Caco-2 (cell line): ENCODE measurements at regions of chr3 and their contacts with region 1.

Region 1: DNA sequence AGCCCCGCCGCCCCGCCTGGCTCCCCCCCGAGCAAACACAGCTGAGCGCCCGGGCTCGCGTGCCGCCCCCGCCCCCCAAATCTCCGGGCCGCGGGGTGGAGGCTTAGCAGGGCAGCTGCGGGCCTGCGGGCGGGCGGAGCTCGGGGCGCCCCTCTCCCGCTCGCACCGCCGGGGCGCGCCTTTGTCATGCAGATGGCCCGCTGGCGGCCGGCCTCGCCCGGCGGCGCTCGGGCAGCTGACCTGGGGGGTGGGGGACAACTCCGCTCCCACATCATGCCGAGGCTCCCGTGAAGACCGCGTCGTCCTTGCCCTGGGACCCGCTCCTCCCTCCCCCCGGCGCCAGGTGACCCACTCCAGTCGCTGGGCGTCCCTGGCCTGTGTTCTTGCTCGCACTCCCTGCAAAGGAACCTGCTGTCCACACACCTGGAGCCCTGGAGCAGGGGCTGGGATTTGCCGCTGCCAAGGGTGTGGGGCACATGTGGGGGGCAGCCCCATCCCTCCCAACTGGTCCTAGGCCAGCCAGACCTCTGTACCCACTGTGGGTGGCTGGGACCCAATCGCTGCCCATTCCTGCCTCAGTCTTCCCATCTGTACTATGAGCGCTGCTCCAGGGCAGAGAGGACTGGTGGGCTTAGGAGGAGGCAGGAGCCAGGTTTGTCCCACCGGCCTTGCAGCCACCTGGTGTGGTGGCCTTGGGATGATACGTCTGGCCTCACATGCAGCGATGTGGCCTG is 33.6 kb downstream of the DNAJB8 start:
- DNase-seq: peak; percentile 60 to 63
- H3K4me3 ChIP-seq: peak overlapping the region; percentile 39
- H3K4me3 Mint-ChIP-seq: peak overlapping the region; percentile 57
- H3K27ac Mint-ChIP-seq: peak overlapping the region; percentile 48
- H3K4me1 ChIP-seq: peaks cover 39% of the 10 kb centered on the region
- H3K4me1 Mint-ChIP-seq: peaks cover 21% of the 10 kb centered on the region
- H3K27me3 ChIP-seq: no peaks in the 10 kb centered on the region
- H3K27me3 Mint-ChIP-seq: no peaks in the 10 kb centered on the region
- CTCF ChIP-seq: no peak

Region 2: DNA sequence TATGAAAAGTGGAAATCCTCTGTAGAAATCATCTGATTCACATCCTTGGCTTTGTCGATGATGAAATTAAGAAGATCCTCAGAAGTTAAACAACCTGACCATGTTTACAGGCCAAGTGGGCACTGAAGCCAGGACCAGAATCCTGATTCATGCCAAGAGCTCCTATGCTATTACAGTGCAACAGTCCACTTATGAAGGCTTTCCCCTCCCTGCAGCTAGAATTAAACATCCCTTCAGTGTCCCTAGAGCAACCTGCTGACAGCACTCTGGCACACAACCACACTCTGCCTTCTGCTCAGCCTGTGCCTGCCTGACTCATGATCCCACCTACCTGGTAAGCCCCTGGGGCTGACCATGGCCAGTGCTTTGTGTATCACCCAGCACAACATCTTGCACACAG is 1812.0 kb before region 1 on chr3:
- CTCF ChIA-PET with region 1: interaction called, 10 read pairs
- POLR2A ChIA-PET with region 1: no interaction called
- intact Hi-C with region 1: no loop called
- DNase-seq: no peak
- H3K4me3 ChIP-seq: no peak overlapping the region
- H3K4me3 Mint-ChIP-seq: no peak overlapping the region
- H3K27ac Mint-ChIP-seq: no peak overlapping the region
- H3K4me1 ChIP-seq: no peaks in the 10 kb centered on the region
- H3K4me1 Mint-ChIP-seq: no peaks in the 10 kb centered on the region
- H3K27me3 ChIP-seq: no peaks in the 10 kb centered on the region
- H3K27me3 Mint-ChIP-seq: no peaks in the 10 kb centered on the region
- CTCF ChIP-seq: no peak

Region 3: GRCh38 chr3:128335324-128336201 is 97.6 kb before region 1 on chr3:
- CTCF ChIA-PET with region 1: no interaction called
- POLR2A ChIA-PET with region 1: no interaction called
- intact Hi-C with region 1: no loop called
- DNase-seq: peak; percentile 82 to 86
- H3K4me3 ChIP-seq: no peak overlapping the region
- H3K4me3 Mint-ChIP-seq: peak overlapping the region; percentile 22
- H3K27ac Mint-ChIP-seq: peak overlapping the region; percentile 22
- H3K4me1 ChIP-seq: peaks cover 45% of the 10 kb centered on the region
- H3K4me1 Mint-ChIP-seq: peaks cover 48% of the 10 kb centered on the region
- H3K27me3 ChIP-seq: no peaks in the 10 kb centered on the region
- H3K27me3 Mint-ChIP-seq: no peaks in the 10 kb centered on the region
- CTCF ChIP-seq: no peak

Region 4: GRCh38 chr3:128487813-128488635 is 54.9 kb after region 1 on chr3:
- CTCF ChIA-PET with region 1: interaction called, 4 read pairs
- POLR2A ChIA-PET with region 1: interaction called, 5 read pairs
- intact Hi-C with region 1: loop called (anchors 1 kb)
- DNase-seq: peak; percentile 93 to 94
- H3K4me3 ChIP-seq: peak overlapping the region; percentile 71
- H3K4me3 Mint-ChIP-seq: peak overlapping the region; percentile 93
- H3K27ac Mint-ChIP-seq: peak overlapping the region; percentile 89
- H3K4me1 ChIP-seq: peaks cover 11% of the 10 kb centered on the region
- H3K4me1 Mint-ChIP-seq: no peaks in the 10 kb centered on the region
- H3K27me3 ChIP-seq: no peaks in the 10 kb centered on the region
- H3K27me3 Mint-ChIP-seq: no peaks in the 10 kb centered on the region
- CTCF ChIP-seq: no peak

Region 5: DNA sequence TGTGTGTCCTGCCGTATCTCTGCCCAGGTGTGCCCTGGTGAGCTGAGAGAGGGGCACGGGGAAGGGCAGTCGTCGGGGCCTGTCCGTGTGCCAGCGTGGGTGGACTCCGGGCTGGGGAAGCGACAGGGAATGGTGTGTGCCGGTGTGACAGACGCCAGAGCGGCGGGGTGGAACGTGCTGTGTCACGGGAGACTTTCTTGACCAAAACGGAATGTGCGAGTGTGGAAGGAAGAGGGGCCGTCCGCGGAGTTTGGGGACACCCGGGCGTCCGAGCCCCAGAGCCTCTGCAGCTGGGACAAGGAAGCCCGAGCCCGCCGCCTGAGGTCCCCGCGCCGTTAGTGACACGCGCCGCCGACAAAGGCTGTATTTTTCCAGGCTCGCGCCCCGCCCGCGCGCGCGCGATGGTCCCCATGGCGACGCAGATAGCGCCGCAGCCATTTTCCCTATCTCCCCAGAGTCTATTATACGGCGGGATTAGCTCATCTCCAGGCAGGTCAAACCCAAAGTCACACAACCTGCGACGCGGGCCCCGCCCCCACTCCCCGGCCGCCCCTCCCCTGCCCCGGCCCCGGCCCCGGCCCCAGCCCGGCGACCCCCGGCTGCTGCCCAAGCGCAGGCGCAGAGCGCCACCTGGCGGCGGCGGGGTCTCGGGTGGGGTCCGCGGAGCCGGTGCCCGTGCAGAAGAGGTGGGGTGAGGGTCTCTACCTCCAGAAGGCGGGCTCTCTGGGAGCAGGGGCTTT is 64.4 kb after region 1 on chr3:
- CTCF ChIA-PET with region 1: interaction called, 16 read pairs
- POLR2A ChIA-PET with region 1: interaction called, 3 read pairs
- intact Hi-C with region 1: no loop called
- DNase-seq: peak; percentile 83 to 87
- H3K4me3 ChIP-seq: peak overlapping the region; percentile 47
- H3K4me3 Mint-ChIP-seq: peak overlapping the region; percentile 79
- H3K27ac Mint-ChIP-seq: peak overlapping the region; percentile 58
- H3K4me1 ChIP-seq: peaks cover 8% of the 10 kb centered on the region; the same call in 1 of the 2 replicates
- H3K4me1 Mint-ChIP-seq: peaks cover 13% of the 10 kb centered on the region
- H3K27me3 ChIP-seq: no peaks in the 10 kb centered on the region
- H3K27me3 Mint-ChIP-seq: no peaks in the 10 kb centered on the region
- CTCF ChIP-seq: peak; percentile 82 to 83